ENCODE measurements at regions of chr10 and their contacts with region 1.

Region 1: DNA sequence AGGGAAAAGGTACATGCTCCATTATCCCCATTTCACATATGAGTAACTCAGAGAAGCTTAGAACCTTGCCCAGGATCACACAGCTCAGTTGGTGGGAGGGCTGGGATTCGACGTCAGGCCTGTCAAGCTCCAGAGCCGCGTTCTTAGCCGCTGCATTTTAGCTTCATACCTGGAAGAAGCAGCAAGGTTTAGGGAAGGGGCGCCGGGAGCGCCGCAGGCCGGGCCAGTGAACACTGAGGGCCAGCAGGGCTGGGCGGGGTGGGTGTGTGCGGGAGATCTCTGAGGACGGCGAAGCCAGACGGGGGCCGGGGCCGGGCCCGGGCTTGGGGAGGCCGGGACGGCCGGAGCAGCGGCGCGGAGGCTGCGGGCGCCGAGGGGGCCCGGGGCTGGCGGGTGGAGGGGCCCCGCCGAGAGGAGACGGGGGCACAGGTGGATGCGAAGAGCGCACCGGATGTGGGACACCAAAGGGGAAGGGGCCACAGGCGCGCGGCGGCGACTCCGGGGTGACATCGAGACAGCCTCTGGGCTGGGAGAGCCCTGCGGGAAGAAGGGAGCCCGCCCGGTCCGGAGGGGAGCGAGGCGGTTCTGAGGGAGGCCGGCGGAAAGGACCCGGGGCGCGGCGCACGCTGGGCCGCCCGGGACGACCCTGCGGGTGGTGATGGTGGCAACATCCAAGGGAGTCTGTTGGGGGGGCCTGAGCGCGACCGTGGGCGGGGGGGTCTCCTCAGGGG is 498 bp downstream of the NDST2 start:
- DNase-seq: peak; percentile 27 to 54
- ATAC-seq: peak in 6 of 8 donors; percentile 10 to 43 (median 20)
- H3K4me3 ChIP-seq: peak overlapping the region; percentile 70 to 99 (median 90)
- H3K27ac ChIP-seq: peak overlapping the region; percentile 81 to 99 (median 94)
- H3K4me1 ChIP-seq: peaks cover 0 to 54% (median 22%) of the 10 kb centered on the region in 9 donors
- H3K27me3 ChIP-seq: no peaks in the 10 kb centered on the region
- CTCF ChIP-seq: no peak

Region 2: DNA sequence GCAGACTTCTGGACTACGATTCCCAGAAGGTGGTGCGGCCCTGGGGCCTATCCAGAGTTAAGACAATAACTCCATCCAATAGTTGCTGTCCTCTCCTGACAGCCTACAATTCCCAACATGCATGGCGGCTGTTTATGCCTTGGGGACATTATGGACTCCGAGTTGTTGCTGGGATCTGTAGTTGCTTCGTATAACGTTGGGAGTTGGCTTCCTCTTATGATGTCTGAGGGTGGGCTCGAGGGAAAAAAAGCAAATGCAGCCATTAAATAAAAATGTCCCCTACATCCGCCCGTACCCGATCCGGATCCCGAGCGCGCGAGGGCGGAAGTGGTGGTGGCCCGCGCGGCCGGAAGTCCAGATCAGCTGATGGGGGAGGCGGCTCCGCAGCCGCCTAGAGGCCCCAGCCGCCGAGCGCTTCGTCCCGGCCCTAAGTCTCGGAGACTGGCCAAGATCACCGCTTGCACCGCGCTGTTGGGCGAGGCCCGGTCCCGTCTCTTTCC is 25.6 kb before region 1 on chr10 and contains the start of gene ZSWIM8:
- intact Hi-C with region 1: loop called in 1 of 10 experiments (anchors 1 kb)
- DNase-seq: peak; percentile 86 to 92
- ATAC-seq: peak; percentile 87 to 95 (median 92)
- H3K4me3 ChIP-seq: peak within 1 kb of the TSS; percentile 68 to 97 (median 92)
- H3K27ac ChIP-seq: peak within 1 kb of the TSS; percentile 74 to 97 (median 90)
- H3K4me1 ChIP-seq: peaks cover 15 to 67% (median 59%) of the 10 kb centered on the region in 9 donors
- H3K27me3 ChIP-seq: no peaks in the 10 kb centered on the region
- CTCF ChIP-seq: peak in 3 of 9 donors; percentile 10 to 20 (median 14)
- total RNA-seq, gene ZSWIM8: 35.2 to 72.5 (median 43.5) TPM

Measured in heart right ventricle (tissue), 16 donors.